Adrenal gland (tissue), 19 donors: ENCODE measurements at regions of chr11 and their contacts with region 1.

Region 1: GRCh38 chr11:7665473-7666291 is 7.6 kb downstream of the CYB5R2 start:
- DNase-seq: peak; percentile 74 to 93 (median 85)
- H3K4me3 ChIP-seq: no peak overlapping the region
- H3K27ac ChIP-seq: no peak overlapping the region
- H3K4me1 ChIP-seq: no peaks in the 10 kb centered on the region
- H3K27me3 ChIP-seq: no peaks in the 10 kb centered on the region
- CTCF ChIP-seq: peak; percentile 79 to 93 (median 86)
- POLR2A ChIP-seq: no peak

Region 2: DNA sequence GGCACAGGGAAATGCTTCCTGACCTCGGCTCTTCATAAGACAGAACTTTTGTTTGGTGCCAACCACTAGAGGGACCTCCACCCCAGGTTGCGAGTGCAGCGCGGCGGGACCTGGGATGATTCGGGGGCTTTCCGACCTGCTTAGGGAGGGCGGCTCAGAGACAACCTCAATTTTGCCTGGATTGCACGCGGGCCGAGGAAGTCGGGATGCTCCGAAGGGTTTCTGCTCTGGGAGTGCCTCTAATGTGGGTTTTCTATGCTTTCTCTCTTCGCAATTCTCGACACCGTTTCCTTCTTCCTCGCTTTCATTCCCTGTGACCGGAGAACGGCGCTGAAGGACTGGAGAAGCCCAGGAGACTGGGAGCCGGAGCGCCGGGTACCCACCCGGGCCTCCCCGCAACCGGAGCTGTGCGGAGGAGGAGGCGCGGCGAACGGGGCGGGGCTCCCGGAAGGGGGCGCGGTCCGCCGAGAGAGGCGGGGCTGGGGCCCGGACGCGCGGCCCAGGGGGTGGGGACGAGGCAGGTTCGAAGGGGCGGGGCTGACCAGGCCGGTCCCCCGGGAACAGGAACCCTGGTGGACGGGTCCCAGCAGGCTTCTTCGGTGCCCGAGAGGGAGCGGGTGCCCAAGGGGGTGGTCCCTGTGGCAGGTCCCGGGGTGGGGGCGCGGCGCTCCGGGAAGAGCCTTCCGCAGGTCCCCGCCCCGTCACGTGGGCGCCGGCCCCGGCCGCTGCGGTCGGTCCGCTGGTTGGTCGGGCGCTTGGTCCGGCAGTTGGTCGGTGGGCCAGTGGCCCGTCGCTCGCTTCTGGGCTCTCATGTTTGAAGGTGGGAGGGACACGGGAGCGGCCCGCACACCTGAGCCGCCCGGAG is 152.2 kb before region 1 on chr11 and contains the start of gene PPFIBP2:
- intact Hi-C with region 1: loop called in 1 of 2 experiments (anchors 10 kb)
- DNase-seq: peak; percentile 80 to 88 (median 84)
- H3K4me3 ChIP-seq: peak within 1 kb of the TSS; percentile 64 to 92 (median 82)
- H3K27ac ChIP-seq: peak within 1 kb of the TSS; percentile 77 to 97 (median 89)
- H3K4me1 ChIP-seq: peaks cover 11 to 26% of the 10 kb centered on the region in 2 donors
- H3K27me3 ChIP-seq: no peaks in the 10 kb centered on the region
- CTCF ChIP-seq: peak; percentile 60 to 76 (median 66)
- POLR2A ChIP-seq: peak; percentile 54 to 67
- total RNA-seq, gene PPFIBP2: 11.4 to 36.5 (median 21.0) TPM